ENCODE measurements at regions of chr2 and their contacts with region 1.

Region 1: GRCh38 chr2:230383453-230383852 is 32.5 kb upstream of the SP100 start:
- ATAC-seq: no peak
- H3K4me3 ChIP-seq: no peak overlapping the region
- H3K27ac ChIP-seq: no peak overlapping the region
- H3K4me1 ChIP-seq: no peaks in the 10 kb centered on the region

Region 2: GRCh38 chr2:230097841-230098240 is 285.6 kb before region 1 on chr2:
- in situ Hi-C with region 1: no loop called
- ATAC-seq: no peak
- H3K4me3 ChIP-seq: no peak overlapping the region
- H3K27ac ChIP-seq: no peak overlapping the region
- H3K4me1 ChIP-seq: no peaks in the 10 kb centered on the region

Region 3: GRCh38 chr2:230219419-230220331 is 163.8 kb before region 1 on chr2 and contains the start of gene SP110:
- in situ Hi-C with region 1: loop called in 1 of 9 experiments (anchors 25 kb)
- ATAC-seq: peak in 7 of 8 experiments; percentile 16 to 93 (median 45)
- H3K4me3 ChIP-seq: peak within 1 kb of the TSS; percentile 8 to 26 (median 10)
- H3K27ac ChIP-seq: no peak within 1 kb of the TSS
- H3K4me1 ChIP-seq: no peaks in the 10 kb centered on the region
- total RNA-seq, gene SP110: 0.11 to 40.0 (median 5.9) TPM

Region 4: DNA sequence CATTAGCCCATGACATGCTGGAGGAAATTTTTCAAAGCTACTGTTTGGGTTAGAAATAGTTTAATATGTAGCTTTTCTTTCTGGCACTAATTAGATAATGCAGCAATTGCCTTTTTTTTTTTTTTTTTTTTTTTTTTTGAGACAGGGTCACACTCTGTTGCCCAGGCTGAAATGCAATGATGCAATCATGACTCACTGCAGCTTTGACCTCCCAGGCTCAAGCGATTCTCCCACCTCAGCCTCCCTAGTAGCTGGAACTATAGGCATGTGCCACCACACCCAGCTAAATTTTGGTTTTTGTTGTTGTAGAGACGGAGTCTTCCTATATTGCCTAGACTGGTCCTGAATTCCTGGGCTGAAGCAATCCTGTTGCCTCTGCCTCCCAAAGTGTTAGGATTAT is 168.7 kb after region 1 on chr2:
- in situ Hi-C with region 1: no loop called
- ATAC-seq: no peak
- H3K4me3 ChIP-seq: no peak overlapping the region
- H3K27ac ChIP-seq: no peak overlapping the region
- H3K4me1 ChIP-seq: no peaks in the 10 kb centered on the region

Region 5: GRCh38 chr2:231436957-231437356 is 1053.5 kb after region 1 on chr2:
- in situ Hi-C with region 1: no loop called
- ATAC-seq: no peak
- H3K4me3 ChIP-seq: no peak overlapping the region
- H3K27ac ChIP-seq: no peak overlapping the region
- H3K4me1 ChIP-seq: no peaks in the 10 kb centered on the region